AG04450 (cell line): ENCODE measurements at regions of chr2 and their contacts with region 1.

Region 1: DNA sequence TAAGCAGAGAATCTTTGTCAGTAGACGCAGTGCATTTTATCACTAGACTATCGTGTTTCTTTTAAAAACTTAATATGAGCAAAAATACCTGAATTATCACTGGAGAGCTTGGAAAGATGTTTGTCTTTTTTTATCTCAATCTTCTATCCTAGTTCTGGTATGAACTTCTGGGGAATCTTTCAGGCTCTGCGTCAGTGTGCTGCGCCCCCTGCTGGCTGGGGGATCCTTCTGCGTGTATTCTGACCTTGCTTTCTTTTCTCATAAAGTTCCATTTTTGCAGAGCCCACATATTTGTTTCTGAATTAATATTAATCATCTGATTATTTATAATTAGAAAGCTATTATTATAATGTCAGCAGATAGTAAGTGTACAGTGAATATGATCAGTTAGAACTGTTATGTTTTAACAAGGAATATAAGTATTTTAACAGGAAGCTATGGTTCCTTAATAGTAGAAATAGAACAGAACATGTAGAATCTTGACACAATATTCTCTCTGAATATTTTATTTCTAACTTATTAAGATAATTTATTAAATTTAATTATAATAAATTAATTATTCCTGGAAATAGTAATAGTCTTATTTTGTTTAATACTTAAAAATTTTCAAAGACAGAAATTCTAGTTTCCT is 945.0 kb upstream of the CRIM1 start:
- DNase-seq: no peak
- H3K4me3 ChIP-seq: no peak overlapping the region
- H3K27ac ChIP-seq: no peak overlapping the region
- H3K27me3 ChIP-seq: no peaks in the 10 kb centered on the region
- CTCF ChIP-seq: peak; percentile 72

Region 2: GRCh38 chr2:33673937-33674336 is 1736.6 kb before region 1 on chr2:
- CTCF ChIA-PET with region 1: interaction called, 45 read pairs
- POLR2A ChIA-PET with region 1: no interaction called
- DNase-seq: no peak
- H3K4me3 ChIP-seq: no peak overlapping the region
- H3K27ac ChIP-seq: no peak overlapping the region
- H3K27me3 ChIP-seq: no peaks in the 10 kb centered on the region
- CTCF ChIP-seq: no peak

Region 3: GRCh38 chr2:34096562-34097171 is 1313.9 kb before region 1 on chr2:
- CTCF ChIA-PET with region 1: interaction called, 13 read pairs
- POLR2A ChIA-PET with region 1: no interaction called
- DNase-seq: peak; percentile 20
- H3K4me3 ChIP-seq: no peak overlapping the region
- H3K27ac ChIP-seq: no peak overlapping the region
- H3K27me3 ChIP-seq: no peaks in the 10 kb centered on the region
- CTCF ChIP-seq: peak; percentile 66

Region 4: GRCh38 chr2:35298496-35298895 is 112.0 kb before region 1 on chr2:
- CTCF ChIA-PET with region 1: no interaction called
- POLR2A ChIA-PET with region 1: no interaction called
- DNase-seq: no peak
- H3K4me3 ChIP-seq: no peak overlapping the region
- H3K27ac ChIP-seq: no peak overlapping the region
- H3K27me3 ChIP-seq: no peaks in the 10 kb centered on the region
- CTCF ChIP-seq: no peak

Region 5: DNA sequence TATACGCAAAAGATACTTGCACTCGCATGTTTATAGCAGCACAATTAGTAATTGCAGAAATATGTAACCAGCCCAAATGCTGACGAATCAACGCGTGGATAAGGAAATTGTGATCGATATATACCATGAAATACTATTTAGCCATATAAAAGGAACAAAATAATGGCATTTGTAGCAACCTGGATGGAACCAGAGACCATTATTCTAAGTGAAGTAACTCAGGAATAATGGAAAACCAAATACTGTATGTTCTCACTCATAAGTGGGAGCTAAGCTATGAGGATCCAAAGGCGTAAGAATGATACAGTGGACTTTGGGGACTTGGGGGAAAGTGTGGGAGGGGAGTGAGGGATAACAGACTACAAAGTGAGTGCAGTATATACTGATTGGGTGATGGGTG is 63.0 kb before region 1 on chr2:
- CTCF ChIA-PET with region 1: no interaction called
- POLR2A ChIA-PET with region 1: no interaction called
- DNase-seq: no peak
- H3K4me3 ChIP-seq: no peak overlapping the region
- H3K27ac ChIP-seq: no peak overlapping the region
- H3K27me3 ChIP-seq: no peaks in the 10 kb centered on the region
- CTCF ChIP-seq: no peak

Region 6: DNA sequence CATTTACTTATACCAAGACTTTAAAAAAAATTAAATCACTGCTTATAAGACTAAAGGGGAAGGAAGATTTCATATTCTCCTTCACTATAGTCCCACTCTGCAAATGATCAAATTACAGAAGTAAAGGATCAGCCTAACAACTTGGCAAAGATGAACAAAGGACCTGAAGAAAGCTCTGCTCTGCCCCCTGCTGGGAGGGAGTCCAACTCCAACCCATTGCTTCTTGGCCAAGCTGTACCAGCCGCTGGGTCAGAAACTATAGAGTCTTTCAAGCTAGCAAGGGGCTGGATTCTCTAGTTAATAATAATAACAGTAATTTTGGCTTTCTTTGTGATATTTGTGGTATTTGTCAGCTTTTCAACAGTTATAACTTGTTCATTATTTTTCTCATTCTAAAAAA is 18.0 kb after region 1 on chr2:
- CTCF ChIA-PET with region 1: no interaction called
- POLR2A ChIA-PET with region 1: no interaction called
- DNase-seq: no peak
- H3K4me3 ChIP-seq: no peak overlapping the region
- H3K27ac ChIP-seq: no peak overlapping the region
- H3K27me3 ChIP-seq: no peaks in the 10 kb centered on the region
- CTCF ChIP-seq: peak; percentile 34

Region 7: DNA sequence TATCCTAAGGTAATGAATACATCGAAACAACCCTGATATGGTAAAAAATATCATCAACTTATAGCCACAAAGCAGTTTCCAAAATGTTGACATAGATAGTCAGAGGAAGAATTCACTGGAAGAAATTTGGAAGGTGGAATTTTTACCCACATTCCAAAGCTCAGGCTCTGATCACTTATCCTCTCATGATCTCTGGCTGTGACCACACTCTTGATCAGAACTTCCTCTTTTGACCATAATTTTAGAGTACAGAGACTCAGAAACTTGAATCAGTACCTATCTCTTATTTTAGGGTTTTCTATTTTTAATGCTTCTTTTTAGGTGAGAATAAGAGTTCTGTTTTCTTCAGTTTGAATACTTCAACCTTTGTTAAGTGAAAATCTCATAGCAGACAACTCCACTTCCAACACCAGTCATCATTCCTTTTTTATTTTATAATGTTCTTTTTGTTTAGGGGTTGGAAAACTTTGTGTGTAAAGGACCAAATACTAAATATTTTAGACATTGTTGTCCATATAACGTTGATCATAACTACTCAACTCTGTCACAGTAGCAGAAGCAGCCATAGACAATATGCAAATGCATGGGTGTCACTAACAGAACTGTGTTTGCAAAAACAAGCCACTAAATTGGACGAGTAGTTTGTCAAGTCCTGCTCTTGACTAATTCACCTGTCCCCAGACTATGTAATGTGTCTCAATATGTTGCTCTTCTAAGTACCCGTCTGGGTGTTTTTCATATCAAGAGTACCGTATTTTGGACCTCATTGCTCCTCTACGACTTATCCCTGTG is 53.5 kb after region 1 on chr2:
- CTCF ChIA-PET with region 1: no interaction called
- POLR2A ChIA-PET with region 1: no interaction called
- DNase-seq: no peak
- H3K4me3 ChIP-seq: no peak overlapping the region
- H3K27ac ChIP-seq: no peak overlapping the region
- H3K27me3 ChIP-seq: no peaks in the 10 kb centered on the region
- CTCF ChIP-seq: no peak